Activated CD4-positive, alpha-beta T cell treated with anti-CD3 and anti-CD28 coated beads for 36 hours (primary cell): ENCODE measurements at regions of chr2 and their contacts with region 1.

Region 1: DNA sequence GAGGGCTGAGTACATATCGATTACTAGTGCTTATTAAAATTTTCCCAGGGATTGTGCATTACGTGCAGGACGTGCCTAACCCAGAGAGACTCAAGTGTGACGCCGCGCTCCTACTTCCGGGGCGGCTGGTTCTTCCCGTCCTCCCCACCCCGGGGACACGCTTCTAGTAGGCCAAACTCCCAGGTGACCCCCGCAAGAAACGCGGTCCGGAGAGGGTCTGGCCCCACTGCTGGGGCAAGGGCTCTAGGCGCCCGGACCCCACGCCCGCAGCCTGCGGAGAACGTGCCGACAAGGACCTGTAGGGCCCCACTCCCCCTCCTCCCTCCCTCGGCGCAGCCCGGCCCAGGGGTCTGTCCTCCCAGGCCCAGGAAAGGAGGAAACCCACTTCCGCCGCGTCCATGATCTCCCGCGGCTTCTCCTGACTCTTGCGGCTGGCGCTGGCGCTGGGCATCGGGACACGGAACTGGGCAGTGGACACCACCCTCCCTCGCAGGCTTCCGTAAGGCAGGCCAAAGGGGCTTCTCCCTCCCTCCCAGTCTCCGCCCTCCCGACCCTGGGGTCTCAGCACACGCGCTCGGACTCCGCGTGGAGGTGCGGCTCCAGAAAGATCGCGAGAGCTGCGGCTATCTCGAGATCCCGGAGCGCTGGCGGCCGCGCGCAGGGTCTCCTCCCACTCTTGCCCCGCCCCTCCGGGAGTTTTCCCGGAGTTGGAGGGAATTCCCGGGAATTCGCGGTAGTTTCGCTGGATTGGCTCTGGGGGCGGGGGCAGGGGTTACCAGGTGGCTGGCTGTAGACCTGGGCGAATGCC is at the start of gene DARS1:
- DNase-seq: peak; percentile 92
- ATAC-seq: peak; percentile 82
- H3K4me3 Mint-ChIP-seq: peak within 1 kb of the TSS; percentile 93
- H3K27ac Mint-ChIP-seq: peak within 1 kb of the TSS; percentile 97
- H3K4me1 Mint-ChIP-seq: peaks cover 44% of the 10 kb centered on the region
- H3K27me3 Mint-ChIP-seq: no peaks in the 10 kb centered on the region
- total RNA-seq, gene DARS1: 174 to 190 TPM

Region 2: GRCh38 chr2:135411653-135412052 is 573.6 kb before region 1 on chr2:
- CTCF ChIA-PET with region 1: no interaction called
- POLR2A ChIA-PET with region 1: no interaction called
- intact Hi-C with region 1: no loop called
- DNase-seq: no peak
- ATAC-seq: no peak
- H3K4me3 Mint-ChIP-seq: no peak overlapping the region
- H3K27ac Mint-ChIP-seq: no peak overlapping the region
- H3K4me1 Mint-ChIP-seq: no peaks in the 10 kb centered on the region
- H3K27me3 Mint-ChIP-seq: no peaks in the 10 kb centered on the region

Region 3: GRCh38 chr2:135741395-135742324 is 243.6 kb before region 1 on chr2 and contains the start of gene UBXN4:
- CTCF ChIA-PET with region 1: no interaction called
- POLR2A ChIA-PET with region 1: no interaction called
- intact Hi-C with region 1: loop called in 1 of 2 experiments (anchors 1 kb)
- DNase-seq: peak; percentile 98
- ATAC-seq: peak; percentile 93
- H3K4me3 Mint-ChIP-seq: peak within 1 kb of the TSS; percentile 97
- H3K27ac Mint-ChIP-seq: peak within 1 kb of the TSS; percentile 99
- H3K4me1 Mint-ChIP-seq: peaks cover 35% of the 10 kb centered on the region
- H3K27me3 Mint-ChIP-seq: no peaks in the 10 kb centered on the region
- total RNA-seq, gene UBXN4: 97.0 to 104 TPM

Region 4: GRCh38 chr2:135913727-135914365 is 71.4 kb before region 1 on chr2:
- CTCF ChIA-PET with region 1: interaction called, 12 read pairs
- POLR2A ChIA-PET with region 1: no interaction called
- intact Hi-C with region 1: loop called in 1 of 2 experiments (anchors 2 kb)
- DNase-seq: peak; percentile 53
- ATAC-seq: peak; percentile 58
- H3K4me3 Mint-ChIP-seq: no peak overlapping the region
- H3K27ac Mint-ChIP-seq: no peak overlapping the region
- H3K4me1 Mint-ChIP-seq: peaks cover 7% of the 10 kb centered on the region
- H3K27me3 Mint-ChIP-seq: no peaks in the 10 kb centered on the region

Region 5: DNA sequence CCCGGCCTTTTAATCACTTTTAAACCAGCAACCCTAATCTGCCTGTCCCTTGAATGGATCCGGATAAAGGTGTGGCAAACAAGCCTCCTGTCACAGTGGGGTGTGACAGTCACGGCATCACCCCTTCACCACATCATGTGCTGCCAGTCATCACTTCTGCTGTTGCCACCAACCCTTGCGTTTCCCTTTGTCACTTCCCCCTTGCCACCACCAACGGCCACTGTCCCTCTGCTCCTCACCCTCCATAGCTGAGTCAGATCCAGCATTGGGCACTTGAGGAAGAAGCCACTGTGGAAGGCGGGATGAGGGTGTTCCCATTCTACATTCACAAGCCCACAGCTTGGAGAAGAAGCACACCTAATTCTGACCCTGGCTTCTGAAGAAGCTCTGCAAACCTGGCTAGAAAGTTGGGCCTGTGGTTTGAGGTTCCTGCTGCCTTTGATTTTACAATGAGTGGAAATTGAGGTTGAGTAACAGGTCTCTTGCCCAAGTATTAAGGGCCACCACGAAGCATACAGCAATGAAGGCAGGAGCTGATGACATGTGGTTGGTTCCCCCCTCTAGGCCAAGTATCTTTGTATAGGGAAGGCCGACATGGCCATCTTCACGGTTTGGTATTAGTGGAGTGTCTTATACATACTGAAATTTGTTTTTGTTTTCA is 23.1 kb after region 1 on chr2:
- CTCF ChIA-PET with region 1: interaction called, 3 read pairs
- POLR2A ChIA-PET with region 1: interaction called, 4 read pairs
- intact Hi-C with region 1: loop called in 1 of 2 experiments (anchors 1 kb)
- DNase-seq: peak; percentile 74
- ATAC-seq: peak; percentile 91
- H3K4me3 Mint-ChIP-seq: no peak overlapping the region
- H3K27ac Mint-ChIP-seq: peak overlapping the region; percentile 47
- H3K4me1 Mint-ChIP-seq: peaks cover 31% of the 10 kb centered on the region
- H3K27me3 Mint-ChIP-seq: no peaks in the 10 kb centered on the region

Region 6: DNA sequence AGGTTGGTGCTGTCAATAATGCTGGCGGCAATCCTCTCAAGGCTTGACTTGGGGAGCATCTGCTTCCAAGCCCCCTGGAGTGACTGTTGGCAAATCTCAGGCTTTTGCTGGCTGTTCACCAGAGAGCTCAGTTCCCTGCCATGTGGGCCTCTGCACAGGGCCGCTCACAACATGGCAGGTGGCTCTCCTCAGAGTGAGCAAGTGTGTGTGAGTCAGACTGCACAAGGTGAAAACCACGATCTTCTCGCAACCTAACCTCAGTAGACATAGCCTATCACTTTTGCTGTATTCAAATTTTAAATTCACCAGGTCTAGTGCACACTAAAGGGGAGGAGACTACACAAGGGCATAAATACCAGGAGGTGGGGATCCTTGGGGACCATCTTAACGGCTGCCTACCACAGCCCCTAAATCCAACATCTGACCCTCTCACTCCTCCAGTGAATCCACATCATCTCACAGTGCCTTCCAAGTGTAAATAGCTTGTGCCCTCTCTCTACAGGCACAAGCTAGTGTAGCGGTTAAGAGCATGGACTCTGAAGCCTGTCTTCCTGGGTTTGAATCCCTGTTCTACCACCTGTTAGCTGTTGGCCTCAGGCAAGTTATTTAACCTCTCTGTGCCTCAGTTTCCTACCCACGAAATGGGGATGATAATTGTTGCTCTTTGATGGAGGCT is 320.4 kb after region 1 on chr2:
- CTCF ChIA-PET with region 1: no interaction called
- POLR2A ChIA-PET with region 1: interaction called, 5 read pairs
- intact Hi-C with region 1: loop called in 1 of 2 experiments (anchors 5 kb)
- DNase-seq: peak; percentile 84
- ATAC-seq: peak; percentile 99
- H3K4me3 Mint-ChIP-seq: no peak overlapping the region
- H3K27ac Mint-ChIP-seq: peak overlapping the region; percentile 88
- H3K4me1 Mint-ChIP-seq: peaks cover 33% of the 10 kb centered on the region
- H3K27me3 Mint-ChIP-seq: peaks cover 5% of the 10 kb centered on the region